ENCODE measurements at regions of chr11 and their contacts with region 1.

Region 1: GRCh38 chr11:10808553-10809372 is at the start of gene EIF4G2:
- DNase-seq: peak; percentile 98
- ATAC-seq: peak; percentile 96
- H3K4me3 Mint-ChIP-seq: peak within 1 kb of the TSS; percentile 93
- H3K27ac Mint-ChIP-seq: peak within 1 kb of the TSS; percentile 96
- H3K4me1 Mint-ChIP-seq: peaks cover 42% of the 10 kb centered on the region
- H3K27me3 Mint-ChIP-seq: peaks cover 2% of the 10 kb centered on the region
- total RNA-seq, gene EIF4G2: 953 to 1,693 TPM

Region 2: GRCh38 chr11:9314291-9315036 is 1494.3 kb before region 1 on chr11 and contains the start of gene TMEM41B:
- CTCF ChIA-PET with region 1: no interaction called
- POLR2A ChIA-PET with region 1: no interaction called
- intact Hi-C with region 1: loop called in 1 of 2 experiments (anchors 2 kb)
- DNase-seq: peak; percentile 100
- ATAC-seq: peak; percentile 95
- H3K4me3 Mint-ChIP-seq: peak within 1 kb of the TSS; percentile 99
- H3K27ac Mint-ChIP-seq: peak within 1 kb of the TSS; percentile 99
- H3K4me1 Mint-ChIP-seq: peaks cover 36% of the 10 kb centered on the region
- H3K27me3 Mint-ChIP-seq: peaks cover 11% of the 10 kb centered on the region
- total RNA-seq, gene TMEM41B: 20.2 to 29.3 TPM

Region 3: DNA sequence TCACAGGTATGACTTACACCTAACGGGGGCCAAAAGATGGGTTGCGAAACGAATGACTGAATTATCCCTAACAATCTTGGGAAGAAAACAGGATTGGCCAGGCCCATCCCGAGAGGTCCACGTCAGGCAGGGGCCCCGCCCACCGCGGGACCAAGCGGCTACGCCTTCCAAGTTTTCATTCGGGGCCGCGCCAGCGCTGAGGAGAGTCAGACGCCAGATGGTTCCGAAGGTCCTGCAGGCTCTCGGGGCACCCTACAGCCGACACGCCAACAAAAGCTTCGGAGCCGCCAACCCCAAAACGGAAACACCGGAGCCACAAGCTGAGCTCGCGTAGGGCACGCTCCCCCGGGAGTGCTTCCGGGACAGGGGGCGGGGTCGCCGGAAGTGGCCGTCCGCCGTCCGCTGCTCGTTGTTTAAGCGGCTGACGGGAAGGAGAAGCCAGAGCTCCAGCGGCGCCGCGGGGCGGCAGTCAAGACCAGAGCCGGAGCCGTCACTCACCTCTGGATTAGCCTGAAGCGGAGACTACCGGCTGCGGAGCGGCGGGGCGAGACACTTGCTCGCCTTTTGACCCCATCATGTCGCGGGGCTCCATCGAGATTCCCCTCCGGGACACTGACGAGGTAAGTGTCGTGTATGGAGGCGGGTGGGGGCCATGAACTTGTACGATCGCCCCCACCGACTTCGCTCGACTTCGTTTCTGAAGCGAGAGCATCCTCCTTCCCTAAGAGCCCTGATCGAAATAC is 57.8 kb before region 1 on chr11 and contains the start of gene CTR9:
- CTCF ChIA-PET with region 1: no interaction called
- POLR2A ChIA-PET with region 1: interaction called, 8 read pairs
- intact Hi-C with region 1: loop called (anchors 1 kb)
- DNase-seq: peak; percentile 97
- ATAC-seq: peak; percentile 92
- H3K4me3 Mint-ChIP-seq: peak within 1 kb of the TSS; percentile 96
- H3K27ac Mint-ChIP-seq: peak within 1 kb of the TSS; percentile 92
- H3K4me1 Mint-ChIP-seq: peaks cover 16% of the 10 kb centered on the region
- H3K27me3 Mint-ChIP-seq: no peaks in the 10 kb centered on the region
- total RNA-seq, gene CTR9: 39.7 to 43.9 TPM

Region 4: DNA sequence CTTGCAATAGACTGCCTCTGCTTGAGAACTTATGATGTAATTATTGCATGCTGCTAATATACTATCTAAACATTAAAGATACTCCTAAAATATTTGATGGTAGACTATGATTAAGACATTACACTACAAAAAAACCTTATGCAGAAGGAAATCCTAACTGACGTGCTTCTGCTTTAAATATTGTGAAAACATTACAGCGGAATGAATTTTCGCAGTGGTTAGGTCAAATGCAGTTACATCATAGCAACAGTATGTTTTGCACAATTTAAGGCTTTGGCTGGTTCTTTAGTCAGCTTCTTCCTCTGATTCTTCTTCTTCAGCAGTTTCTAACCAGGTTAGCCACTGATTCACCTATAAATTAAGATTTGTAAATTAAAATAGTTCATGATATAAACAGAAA is 11.2 kb before region 1 on chr11:
- CTCF ChIA-PET with region 1: interaction called, 60 read pairs
- POLR2A ChIA-PET with region 1: interaction called, 32 read pairs
- intact Hi-C with region 1: no loop called
- DNase-seq: no peak
- ATAC-seq: no peak
- H3K4me3 Mint-ChIP-seq: no peak overlapping the region
- H3K27ac Mint-ChIP-seq: no peak overlapping the region
- H3K4me1 Mint-ChIP-seq: peaks cover 67% of the 10 kb centered on the region
- H3K27me3 Mint-ChIP-seq: peaks cover 3% of the 10 kb centered on the region

Region 5: GRCh38 chr11:10878408-10879214 is 69.8 kb after region 1 on chr11:
- CTCF ChIA-PET with region 1: interaction called, 12 read pairs
- POLR2A ChIA-PET with region 1: interaction called, 4 read pairs
- intact Hi-C with region 1: no loop called
- DNase-seq: no peak
- ATAC-seq: peak; percentile 83
- H3K4me3 Mint-ChIP-seq: no peak overlapping the region
- H3K27ac Mint-ChIP-seq: peak overlapping the region; percentile 52
- H3K4me1 Mint-ChIP-seq: peaks cover 13% of the 10 kb centered on the region
- H3K27me3 Mint-ChIP-seq: no peaks in the 10 kb centered on the region

Region 6: GRCh38 chr11:11157185-11157584 is 348.4 kb after region 1 on chr11:
- CTCF ChIA-PET with region 1: no interaction called
- POLR2A ChIA-PET with region 1: no interaction called
- intact Hi-C with region 1: loop called in 1 of 2 experiments (anchors 10 kb)
- DNase-seq: peak; percentile 69
- ATAC-seq: peak; percentile 42
- H3K4me3 Mint-ChIP-seq: no peak overlapping the region
- H3K27ac Mint-ChIP-seq: peak overlapping the region; percentile 76
- H3K4me1 Mint-ChIP-seq: peaks cover 26% of the 10 kb centered on the region
- H3K27me3 Mint-ChIP-seq: no peaks in the 10 kb centered on the region